Posterior cingulate gyrus (tissue), 11 donors: ENCODE measurements at regions of chr16 and their contacts with region 1.

Region 1: GRCh38 chr16:13767215-13767614 is 152.7 kb upstream of the ERCC4 start:
- DNase-seq: no peak

Region 2: GRCh38 chr16:13573903-13574302 is 193.3 kb before region 1 on chr16:
- intact Hi-C with region 1: no loop called
- DNase-seq: no peak

Region 3: GRCh38 chr16:13873835-13874438 is 106.7 kb after region 1 on chr16:
- intact Hi-C with region 1: loop called (anchors 10 kb)
- DNase-seq: peak in 3 of 10 donors; percentile 8 to 75 (median 10)